ENCODE measurements at regions of chr3 and their contacts with region 1.

Region 1: DNA sequence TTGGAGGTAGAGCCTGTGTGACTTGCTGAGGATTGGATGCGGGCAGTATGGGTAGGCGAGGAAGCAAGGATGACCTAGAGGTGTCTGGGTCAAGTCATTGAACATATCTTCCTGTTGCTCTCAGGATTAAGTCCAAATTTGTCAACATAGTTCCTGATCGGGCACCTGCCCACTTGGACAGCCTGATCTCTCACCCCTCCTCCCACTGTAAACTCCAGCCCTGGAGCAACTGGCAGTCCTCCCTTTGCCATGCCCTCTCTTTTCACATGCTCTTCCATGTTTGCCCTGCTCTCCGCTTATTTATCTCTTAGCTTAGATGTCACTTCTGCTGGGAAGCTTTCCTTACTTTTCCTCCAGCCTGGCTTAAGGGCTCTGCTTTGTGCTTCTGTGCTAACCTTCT is 47.6 kb upstream of the PPP4R2 start:
- DNase-seq: no peak
- H3K4me3 ChIP-seq: no peak overlapping the region
- H3K27ac ChIP-seq: no peak overlapping the region
- H3K4me1 ChIP-seq: peaks cover 6% of the 10 kb centered on the region
- H3K27me3 ChIP-seq: no peaks in the 10 kb centered on the region
- CTCF ChIP-seq: no peak

Region 2: GRCh38 chr3:73041537-73041936 is 92.5 kb after region 1 on chr3:
- CTCF ChIA-PET with region 1: no interaction called
- dilution Hi-C with region 1: loop called (anchors 5 kb)
- in situ Hi-C with region 1: no loop called
- intact Hi-C with region 1: no loop called
- DNase-seq: no peak
- H3K4me3 ChIP-seq: no peak overlapping the region
- H3K27ac ChIP-seq: no peak overlapping the region
- H3K4me1 ChIP-seq: peaks cover 21% of the 10 kb centered on the region
- H3K27me3 ChIP-seq: no peaks in the 10 kb centered on the region
- CTCF ChIP-seq: no peak

Region 3: GRCh38 chr3:73490453-73491286 is 541.7 kb after region 1 on chr3:
- CTCF ChIA-PET with region 1: no interaction called
- dilution Hi-C with region 1: no loop called
- in situ Hi-C with region 1: no loop called
- intact Hi-C with region 1: loop called (anchors 10 kb)
- DNase-seq: no peak
- H3K4me3 ChIP-seq: no peak overlapping the region
- H3K27ac ChIP-seq: no peak overlapping the region
- H3K4me1 ChIP-seq: peaks cover 6% of the 10 kb centered on the region
- H3K27me3 ChIP-seq: no peaks in the 10 kb centered on the region
- CTCF ChIP-seq: no peak